GM10248 (cell line): ENCODE measurements at regions of chrX and their contacts with region 1.

Region 1: DNA sequence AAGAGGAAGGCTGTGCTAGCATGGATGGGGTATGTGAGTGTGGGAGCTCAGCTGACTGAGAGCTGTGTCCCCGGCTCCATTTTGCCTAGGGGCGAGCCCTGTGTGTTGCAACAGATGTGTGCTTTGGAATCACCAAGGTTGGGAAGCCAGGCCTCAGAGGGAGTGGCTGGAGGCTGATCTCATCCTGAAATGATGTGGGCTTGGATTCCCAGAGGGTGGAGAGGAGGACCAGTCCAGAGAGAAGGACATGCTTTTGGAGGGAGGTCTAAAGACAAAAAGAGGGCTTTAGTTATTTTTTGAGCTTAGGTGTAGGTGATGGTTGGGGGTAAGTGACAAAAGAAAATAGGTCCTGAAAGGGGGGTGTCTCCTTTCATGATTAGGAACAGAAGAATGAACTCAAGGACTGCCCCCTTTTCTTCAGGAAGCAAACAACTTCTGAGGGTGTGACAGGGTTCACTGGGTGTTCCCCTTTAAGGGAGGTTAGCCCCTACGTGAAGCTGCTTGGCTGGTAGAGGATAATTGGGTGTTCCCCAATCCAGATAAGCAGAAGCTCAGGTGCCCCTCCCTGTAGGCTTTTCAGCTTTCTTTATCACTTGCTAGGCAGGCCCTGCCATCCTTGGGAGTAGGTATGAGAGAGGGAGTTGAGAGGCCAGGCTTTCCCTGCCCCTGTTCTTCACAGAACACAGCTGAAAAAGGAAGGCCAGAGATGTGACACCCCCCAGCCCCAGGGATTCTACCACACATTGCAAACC is 44.0 kb downstream of the RTL9 start:
- DNase-seq: no peak
- CTCF ChIP-seq: no peak

Region 2: GRCh38 chrX:110359273-110359672 is 43.4 kb before region 1 on chrX:
- CTCF ChIA-PET with region 1: no interaction called
- POLR2A ChIA-PET with region 1: no interaction called
- DNase-seq: no peak
- CTCF ChIP-seq: no peak

Region 3: GRCh38 chrX:110412971-110413721 is 10.5 kb after region 1 on chrX:
- CTCF ChIA-PET with region 1: interaction called, 13 read pairs
- POLR2A ChIA-PET with region 1: no interaction called
- DNase-seq: peak; percentile 59
- CTCF ChIP-seq: peak; percentile 77